ENCODE measurements at regions of chr12 and their contacts with region 1.

Region 1: GRCh38 chr12:13255792-13256691 is 59.5 kb downstream of the EMP1 start:
- DNase-seq: peak; percentile 85
- ATAC-seq: peak; percentile 100
- H3K4me3 Mint-ChIP-seq: no peak overlapping the region
- H3K27ac Mint-ChIP-seq: no peak overlapping the region
- H3K4me1 Mint-ChIP-seq: peaks cover 3% of the 10 kb centered on the region
- H3K27me3 Mint-ChIP-seq: peaks cover 1% of the 10 kb centered on the region
- CTCF ChIP-seq: peak; percentile 95

Region 2: DNA sequence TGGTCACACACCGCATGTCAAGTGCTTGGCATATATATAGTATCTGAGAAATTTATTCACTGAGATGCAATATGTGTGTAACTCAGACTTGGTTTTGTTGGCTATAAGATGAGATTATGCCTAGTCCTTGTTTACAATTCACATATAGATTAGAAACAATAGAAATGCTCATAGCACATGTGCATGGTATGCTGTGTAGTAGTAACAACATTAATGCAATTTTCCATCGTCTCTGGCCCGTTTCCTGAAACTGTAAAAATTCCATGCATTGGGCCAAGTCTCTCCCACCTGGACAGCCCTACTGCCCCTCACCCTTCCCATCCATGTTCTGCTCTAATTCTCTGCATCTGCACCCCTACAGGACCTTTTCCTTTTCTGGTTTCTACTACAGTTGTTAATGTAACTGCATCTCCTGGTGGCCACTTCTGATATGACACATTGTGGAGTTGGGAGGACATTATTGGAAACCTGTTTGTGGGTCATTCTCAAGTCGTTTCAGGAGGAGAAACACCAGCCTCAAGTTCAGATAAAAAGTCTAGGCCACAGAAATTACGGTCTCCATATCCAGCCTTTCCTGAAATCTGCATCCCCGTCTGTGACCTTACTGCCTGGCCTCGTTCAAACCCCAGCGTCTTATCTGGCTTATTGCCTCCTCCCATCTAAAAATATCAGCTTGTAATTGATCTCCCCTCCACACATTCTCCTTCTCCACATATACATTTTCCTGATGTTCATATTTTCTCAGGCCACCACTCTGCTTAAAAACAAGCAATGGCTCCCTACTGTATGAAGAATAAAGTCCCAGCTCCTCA is 22.0 kb before region 1 on chr12:
- CTCF ChIA-PET with region 1: interaction called, 39 read pairs
- POLR2A ChIA-PET with region 1: no interaction called
- intact Hi-C with region 1: no loop called
- DNase-seq: peak; percentile 57
- ATAC-seq: peak; percentile 78
- H3K4me3 Mint-ChIP-seq: no peak overlapping the region
- H3K27ac Mint-ChIP-seq: no peak overlapping the region
- H3K4me1 Mint-ChIP-seq: no peaks in the 10 kb centered on the region
- H3K27me3 Mint-ChIP-seq: peaks cover 4% of the 10 kb centered on the region
- CTCF ChIP-seq: peak; percentile 71

Region 3: GRCh38 chr12:13278249-13278787 is 22.3 kb after region 1 on chr12:
- CTCF ChIA-PET with region 1: interaction called, 36 read pairs
- POLR2A ChIA-PET with region 1: no interaction called
- intact Hi-C with region 1: no loop called
- DNase-seq: peak; percentile 71
- ATAC-seq: peak; percentile 92
- H3K4me3 Mint-ChIP-seq: no peak overlapping the region
- H3K27ac Mint-ChIP-seq: no peak overlapping the region
- H3K4me1 Mint-ChIP-seq: peaks cover 2% of the 10 kb centered on the region
- H3K27me3 Mint-ChIP-seq: peaks cover 33% of the 10 kb centered on the region
- CTCF ChIP-seq: peak; percentile 98

Region 4: DNA sequence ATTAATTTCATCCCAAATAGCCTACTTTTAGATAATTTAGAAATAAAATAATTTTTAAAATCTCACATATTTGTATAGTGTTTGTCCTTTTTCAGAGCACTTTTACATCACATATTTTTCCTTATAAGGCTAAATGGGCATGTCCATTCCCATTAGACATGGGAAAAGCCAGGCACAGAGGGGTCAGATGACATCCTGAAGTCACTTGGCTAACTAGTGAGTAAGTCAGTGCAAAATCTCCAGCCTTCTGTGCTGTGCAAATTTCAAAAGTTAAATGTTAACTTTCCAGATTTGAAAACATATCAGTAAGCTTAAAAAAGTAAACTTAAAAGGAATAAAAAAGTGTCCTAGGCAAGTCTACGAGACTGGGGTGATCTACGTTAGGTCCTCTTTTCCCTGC is 57.8 kb after region 1 on chr12:
- CTCF ChIA-PET with region 1: interaction called, 12 read pairs
- POLR2A ChIA-PET with region 1: no interaction called
- intact Hi-C with region 1: no loop called
- DNase-seq: no peak
- ATAC-seq: no peak
- H3K4me3 Mint-ChIP-seq: no peak overlapping the region
- H3K27ac Mint-ChIP-seq: no peak overlapping the region
- H3K4me1 Mint-ChIP-seq: no peaks in the 10 kb centered on the region
- H3K27me3 Mint-ChIP-seq: peaks cover 23% of the 10 kb centered on the region
- CTCF ChIP-seq: no peak

Measured in activated CD8-positive, alpha-beta T cell treated with anti-CD3 and anti-CD28 coated beads for 36 hours (primary cell).